GM12878 (cell line): ENCODE measurements at regions of chr5 and their contacts with region 1.

Region 1: DNA sequence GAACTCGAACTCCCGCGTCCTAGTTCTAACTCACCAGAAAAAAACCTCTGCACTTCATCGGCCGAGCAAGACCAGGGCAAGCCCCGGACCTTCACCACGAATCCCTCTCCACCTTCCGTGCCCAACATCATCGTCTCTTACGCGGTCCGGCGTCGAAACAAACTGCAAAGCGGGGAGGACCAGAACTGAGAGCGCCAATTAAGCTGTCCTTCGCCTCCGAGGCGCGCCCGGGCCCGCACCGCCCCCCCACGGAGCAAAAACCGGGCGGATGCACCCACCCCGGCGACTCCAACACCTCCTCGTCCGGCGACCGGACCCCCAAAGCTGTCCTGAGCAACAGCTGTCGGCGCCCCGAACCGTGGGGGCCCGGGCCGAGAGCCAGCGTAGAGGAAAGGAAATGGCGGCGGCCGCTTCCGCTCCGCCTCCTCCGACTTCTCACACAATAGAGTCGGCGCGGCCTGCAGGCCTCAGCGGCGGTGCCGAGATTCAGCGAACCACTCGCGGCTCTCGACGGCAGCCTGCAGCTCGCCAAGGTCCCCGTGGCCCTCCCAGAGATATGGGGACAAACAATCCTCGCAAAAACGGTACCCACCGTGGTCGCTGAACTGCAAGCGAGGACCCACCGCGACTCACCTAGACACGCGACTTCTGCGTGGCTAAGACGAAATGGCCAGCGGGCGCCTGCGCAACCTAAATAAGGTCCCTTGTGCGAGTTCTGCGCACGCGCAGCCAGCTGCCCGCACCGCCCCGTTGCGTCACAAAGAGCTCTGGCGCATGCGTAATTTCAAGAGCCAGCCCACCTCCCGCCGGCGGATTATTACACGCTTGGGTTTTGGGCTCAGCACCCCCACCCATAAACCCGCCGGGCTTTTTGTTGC is at the start of gene HNRNPH1:
- DNase-seq: peak; percentile 97
- ATAC-seq: peak; percentile 81
- H3K4me3 ChIP-seq: peak within 1 kb of the TSS; percentile 95
- H3K27ac ChIP-seq: peak within 1 kb of the TSS; percentile 98
- H3K4me1 ChIP-seq: peaks cover 7% of the 10 kb centered on the region
- H3K27me3 ChIP-seq: no peaks in the 10 kb centered on the region
- CTCF ChIP-seq: no peak; a peak in 1 of 6 replicates
- EP300 ChIP-seq: peak in 1 of 2 experiments; percentile 45; a peak in 1 of 4 replicates
- POLR2A ChIP-seq: peak; percentile 99
- RAD21 ChIP-seq: no peak
- polyA plus RNA-seq, gene HNRNPH1: 184 to 189 TPM

Region 2: DNA sequence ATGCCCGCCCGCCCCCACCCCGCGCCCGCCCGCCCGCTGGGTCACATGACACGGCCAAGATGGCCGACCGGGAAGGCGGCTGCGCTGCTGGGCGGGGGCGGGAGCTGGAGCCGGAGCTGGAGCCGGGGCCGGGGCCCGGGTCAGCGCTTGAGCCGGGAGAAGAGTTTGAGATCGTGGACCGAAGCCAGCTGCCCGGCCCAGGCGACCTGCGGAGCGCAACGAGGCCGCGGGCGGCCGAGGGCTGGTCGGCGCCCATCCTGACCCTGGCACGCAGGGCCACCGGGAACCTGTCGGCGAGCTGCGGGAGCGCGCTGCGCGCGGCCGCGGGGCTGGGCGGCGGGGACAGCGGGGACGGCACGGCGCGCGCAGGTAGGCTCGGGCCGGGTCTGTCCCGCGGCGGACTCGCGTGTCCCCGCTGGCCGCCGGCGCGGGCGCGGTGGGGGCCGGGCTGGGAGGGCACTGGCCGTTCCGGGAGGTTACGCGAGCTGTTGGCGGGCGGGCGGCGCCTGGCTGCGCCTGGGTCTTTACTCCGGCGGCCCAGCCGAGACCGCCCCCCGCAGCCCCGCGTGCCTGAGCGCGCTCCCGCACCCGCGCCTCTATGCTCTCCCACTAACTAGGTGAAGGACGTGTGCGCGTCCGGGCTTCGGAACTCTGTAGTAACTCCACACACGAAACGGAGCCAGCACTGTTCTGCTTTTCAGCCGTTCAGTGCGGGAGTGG is 72.6 kb before region 1 on chr5 and contains the start of gene RUFY1:
- CTCF ChIA-PET with region 1: interaction called, 3 read pairs
- POLR2A ChIA-PET with region 1: interaction called, 16 read pairs
- RAD21 ChIA-PET with region 1: interaction called, 5 read pairs
- SMC1A ChIA-PET with region 1: no interaction called
- in situ Hi-C with region 1: no loop called
- intact Hi-C with region 1: loop called (anchors 5 kb)
- DNase-seq: peak; percentile 20
- ATAC-seq: peak; percentile 81
- H3K4me3 ChIP-seq: peak within 1 kb of the TSS; percentile 67
- H3K27ac ChIP-seq: peak within 1 kb of the TSS; percentile 90
- H3K4me1 ChIP-seq: no peaks in the 10 kb centered on the region
- H3K27me3 ChIP-seq: no peaks in the 10 kb centered on the region
- CTCF ChIP-seq: no peak
- EP300 ChIP-seq: no peak
- POLR2A ChIP-seq: peak; percentile 89
- RAD21 ChIP-seq: no peak
- polyA plus RNA-seq, gene RUFY1: 5.7 to 8.1 TPM

Region 3: GRCh38 chr5:179559284-179560252 is 63.7 kb before region 1 on chr5:
- CTCF ChIA-PET with region 1: interaction called, 5 read pairs
- POLR2A ChIA-PET with region 1: interaction called, 7 read pairs
- RAD21 ChIA-PET with region 1: no interaction called
- SMC1A ChIA-PET with region 1: interaction called, 3 read pairs
- in situ Hi-C with region 1: no loop called
- intact Hi-C with region 1: loop called (anchors 5 kb)
- DNase-seq: peak; percentile 80
- ATAC-seq: peak; percentile 100
- H3K4me3 ChIP-seq: peak overlapping the region; percentile 68
- H3K27ac ChIP-seq: peak overlapping the region; percentile 67
- H3K4me1 ChIP-seq: peaks cover 3% of the 10 kb centered on the region
- H3K27me3 ChIP-seq: no peaks in the 10 kb centered on the region
- CTCF ChIP-seq: no peak
- EP300 ChIP-seq: no peak
- POLR2A ChIP-seq: peak; percentile 93
- RAD21 ChIP-seq: no peak